ENCODE measurements at regions of chr14 and their contacts with region 1.

Region 1: GRCh38 chr14:99266181-99267178 is 5.5 kb downstream of the BCL11B start:
- DNase-seq: peak; percentile 91
- H3K4me3 Mint-ChIP-seq: peak overlapping the region; percentile 87
- H3K27ac Mint-ChIP-seq: peak overlapping the region; percentile 99
- H3K4me1 Mint-ChIP-seq: peaks cover 44% of the 10 kb centered on the region
- H3K27me3 Mint-ChIP-seq: no peaks in the 10 kb centered on the region

Region 2: GRCh38 chr14:99188731-99189191 is 77.7 kb before region 1 on chr14:
- CTCF ChIA-PET with region 1: interaction called, 18 read pairs
- POLR2A ChIA-PET with region 1: interaction called, 5 read pairs
- DNase-seq: no peak
- H3K4me3 Mint-ChIP-seq: peak overlapping the region; percentile 81
- H3K27ac Mint-ChIP-seq: peak overlapping the region; percentile 95
- H3K4me1 Mint-ChIP-seq: peaks cover 94% of the 10 kb centered on the region
- H3K27me3 Mint-ChIP-seq: no peaks in the 10 kb centered on the region

Region 3: GRCh38 chr14:99224116-99224910 is 42.2 kb before region 1 on chr14:
- CTCF ChIA-PET with region 1: interaction called, 192 read pairs
- POLR2A ChIA-PET with region 1: interaction called, 3 read pairs
- DNase-seq: no peak
- H3K4me3 Mint-ChIP-seq: peak overlapping the region; percentile 19
- H3K27ac Mint-ChIP-seq: peak overlapping the region; percentile 98
- H3K4me1 Mint-ChIP-seq: peaks cover 95% of the 10 kb centered on the region
- H3K27me3 Mint-ChIP-seq: no peaks in the 10 kb centered on the region

Region 4: DNA sequence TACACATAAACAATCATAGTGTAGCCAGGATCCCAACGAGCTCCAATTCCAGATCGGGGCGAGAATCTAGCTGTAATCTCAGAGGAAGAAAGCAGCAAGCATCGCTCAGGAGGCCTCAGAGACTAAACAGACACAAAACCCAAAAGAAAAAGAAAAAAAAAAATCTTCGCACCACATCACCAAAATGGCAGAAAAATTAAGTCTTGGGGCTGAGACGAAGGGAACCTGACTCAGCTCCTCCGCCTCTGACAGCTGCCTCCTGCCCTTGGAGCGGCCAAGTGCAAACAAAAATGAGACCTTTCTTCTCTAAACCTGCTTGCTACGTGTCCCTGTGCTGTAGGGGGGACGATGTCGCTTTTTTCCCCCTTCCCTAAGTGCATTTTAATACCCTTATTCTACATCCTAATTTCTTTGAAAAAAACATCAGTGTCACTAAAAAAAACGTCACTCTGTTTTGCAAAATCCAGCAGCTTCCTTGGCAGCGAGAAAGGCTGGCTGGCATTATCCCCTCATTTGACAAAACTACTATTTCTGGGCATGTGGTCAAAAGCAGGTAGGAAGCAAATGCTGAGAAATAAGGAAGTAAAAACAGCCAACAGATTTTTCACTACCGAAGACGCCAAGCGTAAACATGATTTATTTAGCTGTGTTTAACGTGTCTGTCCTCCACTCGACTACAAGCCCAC is 25.0 kb before region 1 on chr14:
- CTCF ChIA-PET with region 1: interaction called, 192 read pairs
- POLR2A ChIA-PET with region 1: interaction called, 11 read pairs
- DNase-seq: peak; percentile 55
- H3K4me3 Mint-ChIP-seq: peak overlapping the region; percentile 78
- H3K27ac Mint-ChIP-seq: peak overlapping the region; percentile 96
- H3K4me1 Mint-ChIP-seq: peaks cover 87% of the 10 kb centered on the region
- H3K27me3 Mint-ChIP-seq: no peaks in the 10 kb centered on the region

Region 5: DNA sequence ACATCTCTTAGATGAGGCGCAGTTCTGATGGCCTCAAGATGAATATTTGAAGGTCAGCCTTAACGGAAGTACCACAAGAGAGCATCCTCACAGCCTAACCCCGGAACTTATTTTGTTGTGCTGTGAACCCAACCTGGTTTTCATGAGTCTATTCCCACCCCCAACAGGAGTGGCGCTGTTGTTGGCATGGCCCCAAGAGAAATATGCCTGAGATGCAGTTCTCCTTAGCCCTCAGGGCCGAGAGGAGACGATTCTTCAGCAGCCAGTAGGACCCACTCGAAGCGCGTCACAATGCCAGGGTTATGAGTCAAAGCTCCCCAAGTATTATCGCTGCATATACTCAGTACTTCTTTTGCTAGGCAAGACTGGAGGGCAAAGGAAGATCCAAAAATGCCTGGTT is 30.0 kb after region 1 on chr14:
- CTCF ChIA-PET with region 1: no interaction called
- POLR2A ChIA-PET with region 1: no interaction called
- DNase-seq: no peak
- H3K4me3 Mint-ChIP-seq: no peak overlapping the region
- H3K27ac Mint-ChIP-seq: no peak overlapping the region
- H3K4me1 Mint-ChIP-seq: no peaks in the 10 kb centered on the region
- H3K27me3 Mint-ChIP-seq: peaks cover 23% of the 10 kb centered on the region

Measured in activated CD4-positive, alpha-beta T cell treated with anti-CD3 and anti-CD28 coated beads, Interleukin-2, amount 10 ng/mL, durations not matched to agents 7 days and 5 days (primary cell).